ENCODE measurements at regions of chr2 and their contacts with region 1.

Region 1: GRCh38 chr2:11743846-11744553 is 2.4 kb upstream of the LPIN1 start:
- DNase-seq: peak; percentile 94 to 100
- H3K4me3 ChIP-seq: peak overlapping the region; percentile 37; the same call in 1 of the 2 replicates
- H3K27ac ChIP-seq: peak overlapping the region; percentile 79
- H3K4me1 ChIP-seq: peaks cover 74% of the 10 kb centered on the region
- H3K27me3 ChIP-seq: no peaks in the 10 kb centered on the region
- CTCF ChIP-seq: no peak

Region 2: GRCh38 chr2:11697103-11697871 is 46.7 kb before region 1 on chr2:
- CTCF ChIA-PET with region 1: interaction called, 11 read pairs
- POLR2A ChIA-PET with region 1: no interaction called
- intact Hi-C with region 1: loop called (anchors 1 kb)
- DNase-seq: peak; percentile 93 to 99
- H3K4me3 ChIP-seq: peak overlapping the region; percentile 24; the same call in 1 of the 2 replicates
- H3K27ac ChIP-seq: peak overlapping the region; percentile 83
- H3K4me1 ChIP-seq: peaks cover 79% of the 10 kb centered on the region
- H3K27me3 ChIP-seq: no peaks in the 10 kb centered on the region
- CTCF ChIP-seq: no peak

Region 3: GRCh38 chr2:11753886-11754699 is 10.1 kb after region 1 on chr2:
- CTCF ChIA-PET with region 1: interaction called, 10 read pairs
- POLR2A ChIA-PET with region 1: interaction called, 7 read pairs
- intact Hi-C with region 1: loop called (anchors 1 kb)
- DNase-seq: peak; percentile 65 to 95
- H3K4me3 ChIP-seq: peak overlapping the region; percentile 34; the same call in 1 of the 2 replicates
- H3K27ac ChIP-seq: peak overlapping the region; percentile 91
- H3K4me1 ChIP-seq: peaks cover 61% of the 10 kb centered on the region
- H3K27me3 ChIP-seq: no peaks in the 10 kb centered on the region
- CTCF ChIP-seq: no peak

Region 4: GRCh38 chr2:11852526-11853196 is 108.7 kb after region 1 on chr2:
- CTCF ChIA-PET with region 1: no interaction called
- POLR2A ChIA-PET with region 1: no interaction called
- intact Hi-C with region 1: no loop called
- DNase-seq: no peak
- H3K4me3 ChIP-seq: no peak overlapping the region
- H3K27ac ChIP-seq: no peak overlapping the region
- H3K4me1 ChIP-seq: no peaks in the 10 kb centered on the region
- H3K27me3 ChIP-seq: no peaks in the 10 kb centered on the region
- CTCF ChIP-seq: no peak